H1 (cell line): ENCODE measurements at regions of chr18 and their contacts with region 1.

Region 1: DNA sequence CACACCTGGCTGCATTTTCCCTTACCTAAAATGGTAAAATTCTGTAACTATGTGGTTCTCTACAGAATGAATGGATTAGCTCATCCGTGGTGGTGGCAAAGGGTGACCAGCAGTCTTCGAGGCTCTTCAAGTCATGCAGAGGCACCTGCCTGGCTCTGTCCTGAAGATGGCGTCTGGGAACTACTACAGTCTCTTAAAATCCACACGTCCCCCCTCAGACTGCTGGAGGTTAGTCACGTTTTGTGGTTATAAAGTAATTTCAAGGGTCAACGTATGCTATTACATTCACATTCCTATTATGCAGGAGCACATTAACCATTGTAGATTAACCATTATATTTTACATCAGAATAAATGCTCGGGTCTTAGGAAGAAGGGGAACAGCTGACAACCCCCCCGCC is 616.7 kb downstream of the GALR1 start:
- DNase-seq: no peak
- H3K4me3 ChIP-seq: no peak overlapping the region
- H3K27ac ChIP-seq: no peak overlapping the region
- H3K4me1 ChIP-seq: no peaks in the 10 kb centered on the region
- H3K27me3 ChIP-seq: no peaks in the 10 kb centered on the region
- CTCF ChIP-seq: peak; percentile 20 to 30 (median 21); a peak in 3 of 4 replicates
- EP300 ChIP-seq: no peak
- POLR2A ChIP-seq: no peak
- RAD21 ChIP-seq: peak; percentile 33 to 58

Region 2: DNA sequence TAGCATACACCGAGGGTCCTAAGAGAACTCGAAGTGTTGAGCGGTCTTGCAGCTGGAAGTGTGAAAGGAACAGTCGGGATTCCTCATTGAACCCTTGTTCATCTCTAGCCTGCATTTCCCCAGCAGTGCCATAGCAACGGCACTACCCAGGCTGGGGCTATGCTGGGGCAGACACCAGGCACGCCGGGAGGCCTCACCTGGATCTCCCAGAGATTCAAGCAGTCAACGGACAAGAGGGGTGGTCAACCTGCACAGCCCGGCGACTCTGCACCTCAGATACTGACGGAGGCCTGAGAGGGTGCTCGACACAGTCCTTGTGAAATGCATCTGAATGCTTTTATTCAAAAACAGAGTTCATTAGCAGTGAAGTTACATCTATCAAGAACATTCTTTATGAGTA is 12.5 kb before region 1 on chr18:
- CTCF ChIA-PET with region 1: interaction called, 14 read pairs
- POLR2A ChIA-PET with region 1: no interaction called
- DNase-seq: no peak
- H3K4me3 ChIP-seq: no peak overlapping the region
- H3K27ac ChIP-seq: no peak overlapping the region
- H3K4me1 ChIP-seq: no peaks in the 10 kb centered on the region
- H3K27me3 ChIP-seq: no peaks in the 10 kb centered on the region
- CTCF ChIP-seq: no peak
- EP300 ChIP-seq: no peak
- POLR2A ChIP-seq: no peak
- RAD21 ChIP-seq: no peak